Activated T-helper 2 cell treated with anti-CD3 and anti-CD28 coated beads, Interferon-gamma antibody, Interleukin-2, Interleukin-4, amounts not matched to agents 10 μg/mL and 5 μg/mL and 100 μg/mL, durations not matched to agents 14 hours and 24 hours and 36 hours (primary cell): ENCODE measurements at regions of chr6 and their contacts with region 1.

Region 1: GRCh38 chr6:26196846-26197648 is 109.8 kb downstream of the HFE start:
- DNase-seq: peak; percentile 84
- H3K4me3 Mint-ChIP-seq: peak overlapping the region; percentile 97
- H3K27ac Mint-ChIP-seq: peak overlapping the region; percentile 97
- H3K4me1 Mint-ChIP-seq: peaks cover 43% of the 10 kb centered on the region
- H3K27me3 Mint-ChIP-seq: no peaks in the 10 kb centered on the region

Region 2: DNA sequence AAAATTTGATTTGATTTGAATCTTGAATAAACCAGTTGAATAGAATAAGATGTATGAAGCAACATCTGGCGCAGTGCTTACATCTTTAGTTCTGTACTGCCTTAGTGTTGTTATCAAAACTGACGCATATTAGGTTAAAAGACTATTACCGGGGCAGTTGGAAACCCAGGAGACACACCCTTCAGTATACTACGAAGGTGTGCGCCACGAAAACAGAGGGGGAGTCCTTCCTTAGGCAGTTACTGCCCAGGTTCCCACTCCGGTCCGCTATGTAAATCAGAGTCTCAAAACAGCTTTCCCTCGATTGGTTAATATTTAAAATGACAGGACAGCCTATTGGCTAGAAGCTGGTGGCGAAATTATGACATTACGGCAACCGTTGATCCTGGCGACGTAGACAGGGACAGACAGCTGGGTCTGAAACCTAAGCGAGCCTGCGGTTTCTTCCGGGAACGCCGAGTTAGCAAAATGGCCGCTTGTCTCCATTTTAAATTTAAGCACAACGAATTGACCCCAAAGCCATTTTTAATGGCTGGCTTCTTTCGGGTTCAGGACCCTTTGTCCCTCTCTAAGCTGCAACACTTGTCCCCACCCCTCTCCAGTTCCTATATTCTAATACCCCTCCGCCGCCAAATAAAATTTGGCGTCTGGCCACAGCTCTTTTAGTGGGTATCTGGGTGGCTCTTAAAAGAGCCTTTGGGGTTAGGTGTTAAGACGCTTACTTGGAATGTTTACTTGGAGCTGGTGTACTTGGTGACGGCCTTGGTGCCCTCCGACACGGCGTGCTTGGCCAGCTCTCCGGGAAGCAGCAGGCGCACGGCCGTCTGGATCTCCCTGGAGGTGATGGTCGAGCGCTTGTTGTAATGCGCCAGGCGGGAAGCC is 74.0 kb before region 1 on chr6:
- intact Hi-C with region 1: loop called (anchors 1 kb)
- DNase-seq: peak; percentile 91
- H3K4me3 Mint-ChIP-seq: peak overlapping the region; percentile 100
- H3K27ac Mint-ChIP-seq: peak overlapping the region; percentile 99
- H3K4me1 Mint-ChIP-seq: peaks cover 42% of the 10 kb centered on the region
- H3K27me3 Mint-ChIP-seq: no peaks in the 10 kb centered on the region

Region 3: DNA sequence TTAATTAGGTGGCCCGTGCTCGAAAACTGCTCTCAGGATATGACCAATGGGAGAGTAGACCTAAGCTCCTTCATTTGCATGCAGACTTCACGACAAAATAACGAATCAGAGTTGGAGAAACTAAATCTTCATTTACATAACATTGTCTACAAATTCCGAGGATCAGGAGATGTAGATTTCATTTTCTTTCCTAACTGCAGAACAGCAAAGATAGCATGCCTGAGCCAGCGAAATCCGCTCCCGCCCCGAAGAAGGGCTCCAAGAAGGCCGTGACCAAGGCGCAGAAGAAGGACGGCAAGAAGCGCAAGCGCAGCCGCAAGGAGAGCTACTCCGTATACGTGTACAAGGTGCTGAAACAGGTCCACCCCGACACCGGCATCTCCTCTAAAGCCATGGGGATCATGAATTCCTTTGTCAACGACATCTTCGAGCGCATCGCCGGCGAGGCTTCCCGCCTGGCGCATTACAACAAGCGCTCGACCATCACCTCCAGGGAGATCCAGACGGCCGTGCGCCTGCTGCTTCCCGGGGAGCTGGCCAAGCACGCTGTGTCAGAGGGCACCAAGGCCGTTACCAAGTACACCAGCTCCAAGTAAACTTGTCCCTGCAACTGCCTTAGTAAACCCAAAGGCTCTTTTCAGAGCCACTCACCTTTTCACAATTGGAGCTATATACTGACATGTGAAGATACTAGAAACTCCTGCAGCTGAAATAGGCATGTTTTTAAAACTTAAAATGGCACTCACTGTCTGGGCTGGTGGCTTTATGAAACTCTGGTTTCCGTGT is 13.3 kb before region 1 on chr6:
- intact Hi-C with region 1: loop called (anchors 1 kb)
- DNase-seq: peak; percentile 78
- H3K4me3 Mint-ChIP-seq: peak overlapping the region; percentile 88
- H3K27ac Mint-ChIP-seq: peak overlapping the region; percentile 96
- H3K4me1 Mint-ChIP-seq: peaks cover 69% of the 10 kb centered on the region
- H3K27me3 Mint-ChIP-seq: no peaks in the 10 kb centered on the region

Region 4: DNA sequence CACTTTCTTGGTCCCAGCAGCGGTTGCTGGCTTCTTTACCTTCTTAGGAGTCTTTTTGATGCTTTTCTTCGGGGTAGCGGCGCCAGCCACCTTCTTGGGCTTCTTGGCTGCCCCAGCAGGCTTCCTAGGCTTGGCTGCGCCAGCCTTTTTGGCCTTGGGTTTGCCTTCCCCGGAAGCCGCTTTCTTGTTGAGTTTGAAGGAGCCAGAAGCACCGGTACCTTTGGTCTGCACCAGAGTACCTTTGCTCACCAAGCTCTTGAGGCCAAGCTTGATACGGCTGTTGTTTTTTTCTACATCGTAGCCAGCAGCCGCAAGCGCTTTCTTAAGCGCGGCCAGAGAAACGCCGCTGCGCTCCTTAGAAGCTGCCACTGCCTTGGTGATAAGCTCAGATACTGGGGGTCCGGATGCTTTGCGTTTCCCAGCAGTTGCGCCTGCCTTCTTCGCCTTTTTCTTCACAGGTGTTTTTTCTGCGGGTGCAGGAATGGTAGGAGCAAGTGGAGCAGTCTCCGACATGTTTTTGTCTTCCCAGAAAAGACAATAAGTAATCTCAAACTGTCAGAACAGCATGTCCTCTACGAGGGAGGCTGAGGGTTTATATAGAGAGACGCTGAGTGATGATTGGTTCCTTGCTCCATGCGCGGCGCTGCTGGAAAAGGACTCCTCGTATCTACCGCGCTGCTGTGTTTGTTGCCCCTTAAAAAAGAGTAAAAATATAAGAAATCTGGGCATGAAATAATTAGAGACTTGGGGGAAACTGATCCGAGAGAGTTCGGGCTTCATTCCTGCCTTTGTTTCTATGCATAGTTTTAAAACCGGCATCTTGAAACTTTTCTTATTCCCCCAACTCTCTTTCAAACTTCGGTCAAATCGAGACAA is 37.6 kb after region 1 on chr6:
- intact Hi-C with region 1: loop called (anchors 2 kb)
- DNase-seq: peak; percentile 83
- H3K4me3 Mint-ChIP-seq: peak overlapping the region; percentile 86
- H3K27ac Mint-ChIP-seq: peak overlapping the region; percentile 99
- H3K4me1 Mint-ChIP-seq: peaks cover 44% of the 10 kb centered on the region
- H3K27me3 Mint-ChIP-seq: no peaks in the 10 kb centered on the region

Region 5: GRCh38 chr6:27146706-27147505 is 949.9 kb after region 1 on chr6:
- intact Hi-C with region 1: loop called (anchors 1 kb)
- DNase-seq: peak; percentile 84
- H3K4me3 Mint-ChIP-seq: no peak overlapping the region
- H3K27ac Mint-ChIP-seq: no peak overlapping the region
- H3K4me1 Mint-ChIP-seq: peaks cover 12% of the 10 kb centered on the region
- H3K27me3 Mint-ChIP-seq: no peaks in the 10 kb centered on the region